CD4-positive, alpha-beta T cell (primary cell): ENCODE measurements at regions of chr6 and their contacts with region 1.

Region 1: GRCh38 chr6:15245361-15246216 is at the start of gene JARID2:
- DNase-seq: peak; percentile 87 to 98 (median 93)
- ATAC-seq: peak; percentile 39
- H3K4me3 ChIP-seq: peak within 1 kb of the TSS; percentile 94
- H3K4me3 Mint-ChIP-seq: peak within 1 kb of the TSS; percentile 100
- H3K27ac ChIP-seq: peak within 1 kb of the TSS; percentile 81 to 92
- H3K27ac Mint-ChIP-seq: peak within 1 kb of the TSS; percentile 97
- H3K4me1 ChIP-seq: peaks cover 25% of the 10 kb centered on the region
- H3K4me1 Mint-ChIP-seq: peaks cover 24% of the 10 kb centered on the region
- H3K27me3 ChIP-seq: no peaks in the 10 kb centered on the region
- H3K27me3 Mint-ChIP-seq: peaks cover 4% of the 10 kb centered on the region
- CTCF ChIP-seq: no peak
- total RNA-seq, gene JARID2: 32.0 to 33.0 TPM

Region 2: DNA sequence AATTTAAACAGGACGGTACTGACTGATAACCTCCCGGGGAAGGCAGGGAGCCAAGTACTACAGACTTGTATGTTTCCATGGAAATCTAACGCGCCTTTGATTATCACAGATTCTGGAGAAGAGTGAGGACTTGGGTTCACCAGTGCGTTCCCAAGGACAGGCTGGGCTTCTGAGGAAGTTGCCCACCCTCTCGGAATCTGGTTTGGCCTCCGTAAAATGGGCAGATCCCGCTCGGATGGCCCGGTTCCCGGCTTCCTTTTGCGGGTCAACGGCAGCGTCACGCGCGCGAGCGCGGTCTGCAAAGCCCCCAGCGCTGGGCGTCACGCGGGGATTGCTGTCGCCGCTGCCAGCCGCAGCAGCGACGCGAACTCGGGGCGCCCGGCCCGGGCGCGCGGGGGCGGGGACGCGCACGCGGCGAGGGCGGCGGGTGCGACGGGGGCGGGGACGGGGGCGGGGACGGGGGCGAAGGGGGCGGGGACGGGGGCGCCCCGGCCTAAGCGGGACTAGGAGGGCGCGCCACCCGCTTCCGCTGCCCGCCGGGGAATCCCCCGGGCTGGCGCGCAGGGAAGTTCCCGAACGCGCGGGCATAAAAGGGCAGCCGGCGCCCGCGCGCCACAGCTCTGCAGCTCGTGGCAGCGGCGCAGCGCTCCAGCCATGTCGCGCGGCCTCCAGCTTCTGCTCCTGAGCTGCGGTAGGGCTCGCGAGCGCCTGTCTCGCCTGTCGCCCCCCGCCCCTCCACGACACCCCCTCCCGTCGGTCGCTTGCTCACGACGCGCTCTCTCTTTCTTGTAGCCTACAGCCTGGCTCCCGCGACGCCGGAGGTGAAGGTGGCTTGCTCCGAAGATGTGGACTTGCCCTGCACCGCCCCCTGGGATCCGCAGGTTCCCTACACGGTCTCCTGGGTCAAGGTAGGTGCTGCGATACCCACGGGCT is 1128.2 kb before region 1 on chr6 and contains the start of gene CD83:
- CTCF ChIA-PET with region 1: no interaction called
- POLR2A ChIA-PET with region 1: no interaction called
- intact Hi-C with region 1: loop called in 1 of 2 experiments (anchors 5 kb)
- DNase-seq: peak; percentile 65 to 97 (median 82)
- ATAC-seq: peak; percentile 96
- H3K4me3 ChIP-seq: peak within 1 kb of the TSS; percentile 98
- H3K4me3 Mint-ChIP-seq: peak within 1 kb of the TSS; percentile 96
- H3K27ac ChIP-seq: peak within 1 kb of the TSS; percentile 64 to 76
- H3K27ac Mint-ChIP-seq: peak within 1 kb of the TSS; percentile 94
- H3K4me1 ChIP-seq: peaks cover 19% of the 10 kb centered on the region
- H3K4me1 Mint-ChIP-seq: peaks cover 48% of the 10 kb centered on the region
- H3K27me3 ChIP-seq: no peaks in the 10 kb centered on the region
- H3K27me3 Mint-ChIP-seq: no peaks in the 10 kb centered on the region
- CTCF ChIP-seq: no peak
- total RNA-seq, gene CD83: 35.3 to 36.4 TPM

Region 3: GRCh38 chr6:15264902-15265761 is 19.5 kb after region 1 on chr6:
- CTCF ChIA-PET with region 1: no interaction called
- POLR2A ChIA-PET with region 1: interaction called, 18 read pairs
- intact Hi-C with region 1: loop called in 1 of 2 experiments (anchors 2 kb)
- DNase-seq: no peak
- ATAC-seq: no peak
- H3K4me3 ChIP-seq: no peak overlapping the region
- H3K4me3 Mint-ChIP-seq: peak overlapping the region; percentile 62
- H3K27ac ChIP-seq: no peak overlapping the region
- H3K27ac Mint-ChIP-seq: peak overlapping the region; percentile 23
- H3K4me1 ChIP-seq: peaks cover 75% of the 10 kb centered on the region
- H3K4me1 Mint-ChIP-seq: peaks cover 93% of the 10 kb centered on the region
- H3K27me3 ChIP-seq: no peaks in the 10 kb centered on the region
- H3K27me3 Mint-ChIP-seq: no peaks in the 10 kb centered on the region
- CTCF ChIP-seq: no peak

Region 4: GRCh38 chr6:15327271-15327670 is 81.7 kb after region 1 on chr6:
- CTCF ChIA-PET with region 1: interaction called, 5 read pairs
- POLR2A ChIA-PET with region 1: no interaction called
- intact Hi-C with region 1: loop called (anchors 5 kb)
- DNase-seq: peak; percentile 7 to 66 (median 36)
- ATAC-seq: peak; percentile 80
- H3K4me3 ChIP-seq: no peak overlapping the region
- H3K4me3 Mint-ChIP-seq: peak overlapping the region; percentile 70
- H3K27ac ChIP-seq: no peak overlapping the region
- H3K27ac Mint-ChIP-seq: peak overlapping the region; percentile 25
- H3K4me1 ChIP-seq: peaks cover 40% of the 10 kb centered on the region
- H3K4me1 Mint-ChIP-seq: peaks cover 88% of the 10 kb centered on the region
- H3K27me3 ChIP-seq: no peaks in the 10 kb centered on the region
- H3K27me3 Mint-ChIP-seq: no peaks in the 10 kb centered on the region
- CTCF ChIP-seq: peak; percentile 15

Region 5: DNA sequence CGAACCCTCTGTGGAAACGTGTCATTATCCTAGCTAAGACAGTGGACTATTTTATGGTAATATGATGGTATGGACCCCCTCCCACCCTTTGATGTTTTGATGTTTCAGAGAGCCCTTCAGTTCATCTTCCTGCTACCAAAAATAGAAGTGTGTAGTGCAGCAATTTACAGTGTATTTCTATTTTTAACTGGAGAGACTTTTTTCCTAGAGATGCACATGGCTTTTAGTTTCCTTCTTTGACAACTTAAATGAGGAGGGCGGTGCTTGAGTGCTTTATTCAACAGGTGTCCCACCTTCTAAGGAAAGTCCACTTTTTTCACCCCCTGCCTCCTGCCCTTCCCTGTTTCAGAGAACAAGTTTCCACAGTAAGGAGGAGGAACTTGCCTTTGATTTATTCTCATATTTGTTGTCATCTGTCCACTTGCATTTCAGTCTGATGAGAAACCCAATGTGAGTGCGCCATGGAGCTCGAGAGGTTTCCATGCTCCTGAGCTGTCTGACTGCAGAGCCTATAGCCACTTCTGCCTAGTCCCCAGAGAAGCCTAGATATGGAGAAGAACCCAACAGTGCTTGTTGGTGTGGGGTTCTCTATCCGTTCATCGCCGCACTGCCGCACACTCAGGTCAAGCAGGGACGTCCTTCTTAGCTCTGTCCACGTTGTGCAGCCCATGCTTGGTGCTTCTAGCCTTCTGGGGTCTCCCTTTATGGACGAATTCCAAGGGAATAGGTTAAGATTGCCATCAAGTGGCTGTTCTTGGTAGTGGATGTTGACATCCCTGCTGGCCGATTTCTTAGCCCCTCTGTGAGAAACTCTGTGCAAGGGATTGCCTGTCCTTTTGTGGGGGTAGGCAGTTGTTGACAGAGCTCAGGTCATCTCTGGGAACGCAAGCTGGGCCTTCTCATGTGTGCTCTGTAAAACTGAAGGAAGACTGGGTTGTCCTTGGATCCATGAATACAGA is 144.5 kb after region 1 on chr6:
- CTCF ChIA-PET with region 1: no interaction called
- POLR2A ChIA-PET with region 1: interaction called, 3 read pairs
- intact Hi-C with region 1: loop called in 1 of 2 experiments (anchors 5 kb)
- DNase-seq: peak in 3 of 14 experiments; percentile 11 to 42 (median 41)
- ATAC-seq: peak; percentile 52
- H3K4me3 ChIP-seq: no peak overlapping the region
- H3K4me3 Mint-ChIP-seq: no peak overlapping the region
- H3K27ac ChIP-seq: no peak overlapping the region
- H3K27ac Mint-ChIP-seq: peak overlapping the region; percentile 32
- H3K4me1 ChIP-seq: peaks cover 43% of the 10 kb centered on the region
- H3K4me1 Mint-ChIP-seq: peaks cover 72% of the 10 kb centered on the region
- H3K27me3 ChIP-seq: no peaks in the 10 kb centered on the region
- H3K27me3 Mint-ChIP-seq: no peaks in the 10 kb centered on the region
- CTCF ChIP-seq: peak; percentile 62

Region 6: DNA sequence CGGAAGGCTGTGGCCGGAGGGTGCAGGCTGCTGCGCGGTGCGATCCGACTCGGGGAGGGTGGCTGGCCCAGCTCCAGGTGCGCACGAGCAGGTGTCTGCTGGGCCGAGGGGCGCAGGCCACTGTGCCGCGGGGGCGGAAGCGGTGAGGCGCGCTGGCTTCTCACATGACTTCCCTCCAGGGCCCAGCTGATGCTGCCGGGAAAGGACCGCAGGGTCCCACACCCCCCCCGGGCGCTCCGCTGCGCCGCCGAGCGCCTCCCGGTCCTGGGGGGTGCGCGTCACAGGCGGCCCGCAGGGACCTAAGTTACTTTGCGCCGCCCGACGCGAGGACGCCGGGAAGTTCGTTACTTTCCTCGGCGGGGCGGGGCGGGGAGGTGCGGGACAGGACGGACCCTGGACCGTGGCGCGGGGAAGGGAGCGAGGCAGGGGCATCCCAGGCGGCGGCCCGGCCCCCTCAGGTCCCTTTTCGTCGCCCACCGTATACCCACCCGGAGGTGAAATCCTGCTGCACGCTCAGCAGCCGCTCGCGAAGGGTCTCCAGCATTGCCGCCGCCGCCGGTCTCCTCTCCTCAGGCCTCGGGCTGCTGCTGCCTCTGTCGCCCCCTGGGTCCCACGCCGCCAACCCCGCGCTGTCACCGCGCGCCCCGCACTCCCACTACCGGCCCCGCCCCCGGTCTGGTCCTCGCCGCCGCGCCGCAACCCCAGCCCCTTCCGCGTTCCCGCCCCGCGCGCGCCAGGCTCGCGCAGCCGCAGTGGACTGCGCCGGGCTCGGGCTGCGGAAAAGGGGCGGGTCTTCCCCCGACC is 416.9 kb after region 1 on chr6 and contains the start of gene DTNBP1:
- CTCF ChIA-PET with region 1: no interaction called
- POLR2A ChIA-PET with region 1: no interaction called
- intact Hi-C with region 1: loop called in 1 of 2 experiments (anchors 10 kb)
- DNase-seq: peak; percentile 66 to 91 (median 80)
- ATAC-seq: peak; percentile 78
- H3K4me3 ChIP-seq: peak within 1 kb of the TSS; percentile 70
- H3K4me3 Mint-ChIP-seq: peak within 1 kb of the TSS; percentile 89
- H3K27ac ChIP-seq: peak within 1 kb of the TSS; percentile 45 to 48
- H3K27ac Mint-ChIP-seq: peak within 1 kb of the TSS; percentile 77
- H3K4me1 ChIP-seq: peaks cover 26% of the 10 kb centered on the region
- H3K4me1 Mint-ChIP-seq: peaks cover 41% of the 10 kb centered on the region
- H3K27me3 ChIP-seq: no peaks in the 10 kb centered on the region
- H3K27me3 Mint-ChIP-seq: no peaks in the 10 kb centered on the region
- CTCF ChIP-seq: no peak
- total RNA-seq, gene DTNBP1: 14.5 to 14.7 TPM